Activated B cell treated with CpG ODN at 0.5 μM for 24 hours (primary cell): ENCODE measurements at regions of chr17 and their contacts with region 1.

Region 1: GRCh38 chr17:82518826-82519810 is at the start of gene FOXK2:
- DNase-seq: peak; percentile 99
- ATAC-seq: peak; percentile 96
- H3K4me3 Mint-ChIP-seq: peak within 1 kb of the TSS; percentile 86
- H3K27ac Mint-ChIP-seq: peak within 1 kb of the TSS; percentile 89
- H3K4me1 Mint-ChIP-seq: peaks cover 25% of the 10 kb centered on the region
- H3K27me3 Mint-ChIP-seq: no peaks in the 10 kb centered on the region
- CTCF ChIP-seq: no peak
- total RNA-seq, gene FOXK2: 56.4 and 60.4 TPM in 2 replicates

Region 2: GRCh38 chr17:82450170-82451106 is 68.7 kb before region 1 on chr17 and contains the start of gene CYBC1:
- CTCF ChIA-PET with region 1: no interaction called
- POLR2A ChIA-PET with region 1: interaction called, 33 read pairs
- intact Hi-C with region 1: loop called (anchors 1 kb)
- DNase-seq: peak; percentile 96
- ATAC-seq: peak; percentile 42
- H3K4me3 Mint-ChIP-seq: peak within 1 kb of the TSS; percentile 94
- H3K27ac Mint-ChIP-seq: peak within 1 kb of the TSS; percentile 97
- H3K4me1 Mint-ChIP-seq: peaks cover 42% of the 10 kb centered on the region
- H3K27me3 Mint-ChIP-seq: no peaks in the 10 kb centered on the region
- CTCF ChIP-seq: no peak
- total RNA-seq, gene CYBC1: 405 and 501 TPM in 2 replicates

Region 3: GRCh38 chr17:82457997-82458864 is 60.9 kb before region 1 on chr17 and contains the start of gene NARF:
- CTCF ChIA-PET with region 1: no interaction called
- POLR2A ChIA-PET with region 1: interaction called, 17 read pairs
- intact Hi-C with region 1: loop called (anchors 1 kb)
- DNase-seq: peak; percentile 95
- ATAC-seq: peak; percentile 96
- H3K4me3 Mint-ChIP-seq: peak within 1 kb of the TSS; percentile 88
- H3K27ac Mint-ChIP-seq: peak within 1 kb of the TSS; percentile 96
- H3K4me1 Mint-ChIP-seq: peaks cover 19% of the 10 kb centered on the region
- H3K27me3 Mint-ChIP-seq: no peaks in the 10 kb centered on the region
- CTCF ChIP-seq: no peak
- total RNA-seq, gene NARF: 77.8 and 81.9 TPM in 2 replicates

Region 4: GRCh38 chr17:82507631-82508175 is 11.4 kb before region 1 on chr17:
- CTCF ChIA-PET with region 1: interaction called, 3 read pairs
- POLR2A ChIA-PET with region 1: interaction called, 17 read pairs
- intact Hi-C with region 1: no loop called
- DNase-seq: no peak
- ATAC-seq: no peak
- H3K4me3 Mint-ChIP-seq: no peak overlapping the region
- H3K27ac Mint-ChIP-seq: no peak overlapping the region
- H3K4me1 Mint-ChIP-seq: peaks cover 19% of the 10 kb centered on the region
- H3K27me3 Mint-ChIP-seq: no peaks in the 10 kb centered on the region
- CTCF ChIP-seq: no peak

Region 5: GRCh38 chr17:82611140-82612058 is 92.3 kb after region 1 on chr17:
- CTCF ChIA-PET with region 1: no interaction called
- POLR2A ChIA-PET with region 1: no interaction called
- intact Hi-C with region 1: no loop called
- DNase-seq: no peak
- ATAC-seq: no peak
- H3K4me3 Mint-ChIP-seq: no peak overlapping the region
- H3K27ac Mint-ChIP-seq: no peak overlapping the region
- H3K4me1 Mint-ChIP-seq: no peaks in the 10 kb centered on the region
- H3K27me3 Mint-ChIP-seq: no peaks in the 10 kb centered on the region
- CTCF ChIP-seq: no peak